Activated CD4-positive, alpha-beta T cell treated with anti-CD3 and anti-CD28 coated beads for 36 hours (primary cell): ENCODE measurements at regions of chr1 and their contacts with region 1.

Region 1: DNA sequence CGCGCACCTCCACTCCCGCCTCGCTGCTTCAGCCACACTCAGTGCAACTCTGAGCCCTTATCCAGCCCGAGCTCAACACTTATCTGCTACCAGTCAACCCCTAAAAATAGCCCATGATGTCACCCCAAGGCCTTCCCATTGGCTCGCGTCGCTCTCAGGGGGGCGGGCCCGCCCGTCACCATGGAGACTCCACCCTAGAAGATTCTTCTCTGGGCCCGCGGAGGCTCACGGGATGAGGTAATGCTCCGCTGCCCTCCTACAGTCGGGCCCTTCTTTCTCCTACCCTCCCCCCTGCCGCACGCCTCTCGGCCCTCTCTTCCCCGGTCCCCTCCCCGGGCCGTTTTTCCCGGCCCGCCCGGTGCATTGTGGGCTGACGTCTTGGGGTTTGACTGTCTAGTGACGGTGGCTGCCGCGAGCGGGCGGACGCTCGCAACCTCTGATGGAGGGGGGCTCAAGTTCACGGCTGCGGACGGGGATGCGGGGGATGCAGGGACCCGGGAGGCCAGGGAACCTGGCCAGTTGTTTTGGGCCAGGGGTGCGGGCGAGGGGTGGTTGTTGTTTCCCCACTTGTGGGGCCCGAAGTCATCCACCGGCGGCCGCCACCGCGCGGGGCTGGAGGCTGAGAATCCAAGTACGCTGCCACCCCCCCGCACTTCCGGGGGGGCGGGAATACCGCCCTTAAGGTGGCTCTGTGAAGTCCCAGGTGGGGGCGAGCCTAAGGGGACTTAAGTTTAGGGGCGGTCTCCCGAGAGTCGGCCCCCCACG is at the start of gene JUN:
- DNase-seq: peak; percentile 99
- ATAC-seq: peak; percentile 88
- H3K4me3 Mint-ChIP-seq: peak within 1 kb of the TSS; percentile 79
- H3K27ac Mint-ChIP-seq: peak within 1 kb of the TSS; percentile 91
- H3K4me1 Mint-ChIP-seq: peaks cover 17% of the 10 kb centered on the region
- H3K27me3 Mint-ChIP-seq: no peaks in the 10 kb centered on the region
- total RNA-seq, gene JUN: 24.2 to 25.5 TPM

Region 2: DNA sequence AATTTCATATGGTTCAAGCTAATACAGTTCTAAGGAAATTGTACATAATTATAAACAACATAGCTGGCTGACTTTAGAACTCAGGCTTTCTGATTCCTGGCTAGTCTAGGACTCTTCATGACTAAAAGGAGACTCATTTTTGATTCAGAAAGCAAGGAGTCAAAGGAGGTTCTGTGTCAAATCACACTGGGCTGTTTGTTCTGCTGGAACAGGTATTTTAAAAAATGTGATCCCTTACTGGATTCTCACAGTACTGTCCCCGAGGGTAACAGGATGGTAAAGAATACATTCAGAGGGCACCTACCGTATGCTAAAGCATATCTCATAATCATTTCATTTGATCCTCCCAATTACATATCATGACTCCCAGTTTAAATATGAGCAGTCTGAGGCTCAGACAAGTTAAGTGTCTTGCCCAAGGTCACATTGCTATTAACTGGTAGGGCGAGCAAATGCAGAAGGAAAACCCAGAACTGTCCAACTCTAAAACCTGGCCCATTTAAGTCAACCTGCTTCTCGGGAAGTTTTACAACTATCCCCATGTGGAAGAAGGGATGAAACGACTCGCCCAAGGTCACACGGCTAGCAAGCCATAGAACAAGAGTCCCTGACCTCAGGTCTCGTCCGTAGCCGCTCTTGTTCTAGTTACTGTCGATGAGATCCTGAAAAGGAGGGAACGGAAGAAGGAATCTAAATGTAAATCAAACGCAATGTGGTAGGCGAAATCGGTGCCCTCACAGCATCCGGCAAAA is 85.0 kb before region 1 on chr1:
- CTCF ChIA-PET with region 1: no interaction called
- POLR2A ChIA-PET with region 1: interaction called, 5 read pairs
- intact Hi-C with region 1: loop called in 1 of 2 experiments (anchors 1 kb)
- DNase-seq: no peak
- ATAC-seq: peak; percentile 16
- H3K4me3 Mint-ChIP-seq: peak overlapping the region; percentile 85
- H3K27ac Mint-ChIP-seq: peak overlapping the region; percentile 94
- H3K4me1 Mint-ChIP-seq: peaks cover 11% of the 10 kb centered on the region
- H3K27me3 Mint-ChIP-seq: no peaks in the 10 kb centered on the region

Region 3: GRCh38 chr1:58816072-58816746 is 32.0 kb after region 1 on chr1:
- CTCF ChIA-PET with region 1: no interaction called
- POLR2A ChIA-PET with region 1: interaction called, 7 read pairs
- intact Hi-C with region 1: loop called (anchors 1 kb)
- DNase-seq: peak; percentile 92
- ATAC-seq: peak; percentile 92
- H3K4me3 Mint-ChIP-seq: peak overlapping the region; percentile 77
- H3K27ac Mint-ChIP-seq: peak overlapping the region; percentile 79
- H3K4me1 Mint-ChIP-seq: peaks cover 39% of the 10 kb centered on the region
- H3K27me3 Mint-ChIP-seq: no peaks in the 10 kb centered on the region

Region 4: GRCh38 chr1:59020151-59020997 is 236.2 kb after region 1 on chr1:
- CTCF ChIA-PET with region 1: no interaction called
- POLR2A ChIA-PET with region 1: no interaction called
- intact Hi-C with region 1: loop called (anchors 1 kb)
- DNase-seq: peak; percentile 70
- ATAC-seq: peak; percentile 96
- H3K4me3 Mint-ChIP-seq: peak overlapping the region; percentile 60
- H3K27ac Mint-ChIP-seq: peak overlapping the region; percentile 88
- H3K4me1 Mint-ChIP-seq: peaks cover 26% of the 10 kb centered on the region
- H3K27me3 Mint-ChIP-seq: no peaks in the 10 kb centered on the region

Region 5: DNA sequence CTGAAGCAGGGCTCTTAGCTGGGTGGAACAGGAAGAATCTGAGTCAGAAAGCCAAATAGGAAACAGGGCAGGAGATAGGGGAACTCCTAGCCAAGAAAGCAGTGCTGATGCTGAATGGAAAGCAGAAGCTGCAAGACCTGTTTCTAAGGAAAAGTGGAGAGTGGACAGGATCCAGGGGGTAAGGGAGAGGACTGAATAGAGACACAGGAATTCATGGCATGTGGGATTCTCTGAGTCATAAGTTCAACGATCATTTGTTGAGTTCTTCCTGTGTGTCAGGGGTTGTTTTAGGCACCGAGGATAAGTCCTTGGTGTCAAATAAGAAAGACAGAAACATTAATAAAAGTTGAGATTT is 358.9 kb after region 1 on chr1:
- CTCF ChIA-PET with region 1: no interaction called
- POLR2A ChIA-PET with region 1: no interaction called
- intact Hi-C with region 1: loop called in 1 of 2 experiments (anchors 5 kb)
- DNase-seq: no peak
- ATAC-seq: peak; percentile 39
- H3K4me3 Mint-ChIP-seq: no peak overlapping the region
- H3K27ac Mint-ChIP-seq: no peak overlapping the region
- H3K4me1 Mint-ChIP-seq: peaks cover 22% of the 10 kb centered on the region
- H3K27me3 Mint-ChIP-seq: peaks cover 2% of the 10 kb centered on the region

Region 6: GRCh38 chr1:59477286-59477685 is 693.1 kb after region 1 on chr1:
- CTCF ChIA-PET with region 1: no interaction called
- POLR2A ChIA-PET with region 1: no interaction called
- intact Hi-C with region 1: loop called in 1 of 2 experiments (anchors 5 kb)
- DNase-seq: peak; percentile 76
- ATAC-seq: peak; percentile 93
- H3K4me3 Mint-ChIP-seq: no peak overlapping the region
- H3K27ac Mint-ChIP-seq: peak overlapping the region; percentile 71
- H3K4me1 Mint-ChIP-seq: peaks cover 10% of the 10 kb centered on the region
- H3K27me3 Mint-ChIP-seq: no peaks in the 10 kb centered on the region

Region 7: GRCh38 chr1:59814180-59814900 is 1030.2 kb after region 1 on chr1:
- CTCF ChIA-PET with region 1: no interaction called
- POLR2A ChIA-PET with region 1: no interaction called
- intact Hi-C with region 1: loop called (anchors 1 to 5 kb)
- DNase-seq: peak; percentile 92
- ATAC-seq: peak; percentile 96
- H3K4me3 Mint-ChIP-seq: no peak overlapping the region
- H3K27ac Mint-ChIP-seq: peak overlapping the region; percentile 73
- H3K4me1 Mint-ChIP-seq: peaks cover 8% of the 10 kb centered on the region
- H3K27me3 Mint-ChIP-seq: peaks cover 5% of the 10 kb centered on the region